BJ (cell line): ENCODE measurements at regions of chr2 and their contacts with region 1.

Region 1: GRCh38 chr2:237085248-237086221 is at the start of gene COPS8:
- DNase-seq: peak; percentile 57
- H3K4me3 ChIP-seq: peak within 1 kb of the TSS; percentile 76
- H3K27me3 ChIP-seq: no peaks in the 10 kb centered on the region
- CTCF ChIP-seq: peak; percentile 34; the same call in 1 of the 2 replicates
- polyA plus RNA-seq, gene COPS8: 55.8 and 98.0 TPM in 2 replicates

Region 2: GRCh38 chr2:237072067-237072931 is 13.2 kb before region 1 on chr2:
- CTCF ChIA-PET with region 1: interaction called, 15 read pairs
- POLR2A ChIA-PET with region 1: no interaction called
- DNase-seq: no peak
- H3K4me3 ChIP-seq: no peak overlapping the region
- H3K27me3 ChIP-seq: no peaks in the 10 kb centered on the region
- CTCF ChIP-seq: peak; percentile 96

Region 3: GRCh38 chr2:237097911-237098702 is 12.6 kb after region 1 on chr2:
- CTCF ChIA-PET with region 1: no interaction called
- POLR2A ChIA-PET with region 1: no interaction called
- DNase-seq: peak; percentile 81
- H3K4me3 ChIP-seq: no peak overlapping the region
- H3K27me3 ChIP-seq: no peaks in the 10 kb centered on the region
- CTCF ChIP-seq: no peak

Region 4: DNA sequence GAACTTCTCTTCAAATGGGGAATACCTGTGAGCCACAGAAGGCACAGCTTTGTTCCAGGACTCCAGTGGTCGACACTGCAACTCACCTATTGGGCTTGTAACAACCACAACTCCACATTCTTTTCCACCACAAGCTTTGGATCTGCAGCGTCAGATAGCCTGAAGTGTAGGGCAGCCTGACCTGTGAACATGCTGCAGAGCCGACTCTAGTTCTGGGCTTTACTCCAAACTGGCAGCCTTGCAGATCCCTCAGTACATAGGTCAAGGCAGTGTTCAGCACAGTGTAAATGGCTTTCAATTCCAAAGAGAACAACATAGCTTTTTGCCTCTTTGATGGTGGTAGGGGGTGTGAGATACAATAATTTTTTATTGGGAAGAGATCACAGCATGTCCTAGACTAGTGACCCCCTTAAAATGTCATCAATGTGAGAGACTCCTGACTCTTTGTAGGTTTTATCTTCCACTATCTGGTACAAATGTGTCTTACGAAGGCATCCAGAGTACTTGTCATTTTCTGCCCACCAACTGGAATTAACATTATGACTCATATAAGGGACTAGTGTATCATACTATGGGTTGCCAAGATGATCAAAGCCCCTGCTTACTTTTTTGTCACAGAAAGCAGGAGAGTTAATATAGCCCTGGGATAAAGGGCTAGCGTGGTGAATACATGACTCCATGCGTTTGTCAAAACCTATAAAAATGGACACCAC is 150.0 kb after region 1 on chr2:
- CTCF ChIA-PET with region 1: no interaction called
- POLR2A ChIA-PET with region 1: no interaction called
- DNase-seq: no peak
- H3K4me3 ChIP-seq: no peak overlapping the region
- H3K27me3 ChIP-seq: no peaks in the 10 kb centered on the region
- CTCF ChIP-seq: no peak

Region 5: DNA sequence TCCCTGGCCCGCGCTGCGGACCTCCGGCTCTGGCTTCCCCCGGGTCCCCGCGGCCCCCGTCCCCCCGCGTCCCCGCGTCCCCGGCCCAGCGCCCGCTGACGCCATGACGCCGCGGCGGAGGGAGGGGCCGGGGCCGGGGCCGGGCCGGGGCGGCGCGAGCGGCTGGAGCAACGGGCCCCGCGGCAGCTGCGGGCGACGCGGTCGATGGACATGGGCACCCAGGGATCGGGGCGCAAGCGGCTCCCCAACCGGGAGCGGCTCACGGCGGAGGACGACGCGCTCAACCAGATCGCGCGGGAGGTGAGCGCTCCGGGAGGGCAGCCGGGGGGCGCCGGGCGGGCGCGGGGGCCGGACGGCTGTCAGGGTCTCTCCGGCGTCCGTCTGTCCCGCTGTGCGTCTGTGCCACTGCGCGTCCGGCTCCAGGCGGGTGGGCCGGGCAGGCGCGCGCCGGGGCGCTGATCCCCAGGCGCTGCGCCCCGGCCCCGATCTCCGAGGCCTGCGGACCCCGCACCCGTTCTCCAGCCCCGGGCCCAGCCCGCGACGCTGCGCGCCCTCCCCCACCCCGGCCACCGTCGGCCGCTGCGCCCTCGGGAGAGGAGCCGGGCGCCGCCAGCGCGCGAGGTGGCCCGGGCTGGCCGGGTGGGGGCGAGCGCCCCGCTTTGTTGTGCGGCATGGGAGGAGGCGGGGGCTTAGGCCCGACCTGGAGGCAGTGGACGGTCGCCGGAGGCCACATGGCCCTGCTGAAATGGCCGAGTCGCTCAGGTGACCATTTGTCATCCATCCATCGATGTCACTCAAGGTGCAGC is 542.1 kb after region 1 on chr2 and contains the start of gene LRRFIP1:
- CTCF ChIA-PET with region 1: no interaction called
- POLR2A ChIA-PET with region 1: no interaction called
- DNase-seq: no peak
- H3K4me3 ChIP-seq: peak within 1 kb of the TSS; percentile 57
- H3K27me3 ChIP-seq: no peaks in the 10 kb centered on the region
- CTCF ChIP-seq: no peak
- polyA plus RNA-seq, gene LRRFIP1: 50.4 and 58.5 TPM in 2 replicates